Gastrocnemius medialis (tissue), 4 donors: ENCODE measurements at regions of chr15 and their contacts with region 1.

Region 1: GRCh38 chr15:100349696-100350433 is 8.1 kb upstream of the ADAMTS17 start:
- DNase-seq: peak; percentile 89 to 94
- ATAC-seq: peak; percentile 96 to 98
- H3K4me3 ChIP-seq: peak overlapping the region; percentile 77 to 82 (median 80)
- H3K27ac ChIP-seq: peak overlapping the region; percentile 95 to 96 (median 96)
- H3K4me1 ChIP-seq: peaks cover 8 to 9% of the 10 kb centered on the region in 2 donors
- H3K27me3 ChIP-seq: no peaks in the 10 kb centered on the region
- CTCF ChIP-seq: peak; percentile 76 to 90 (median 87)
- POLR2A ChIP-seq: peak; percentile 55 to 63

Region 2: DNA sequence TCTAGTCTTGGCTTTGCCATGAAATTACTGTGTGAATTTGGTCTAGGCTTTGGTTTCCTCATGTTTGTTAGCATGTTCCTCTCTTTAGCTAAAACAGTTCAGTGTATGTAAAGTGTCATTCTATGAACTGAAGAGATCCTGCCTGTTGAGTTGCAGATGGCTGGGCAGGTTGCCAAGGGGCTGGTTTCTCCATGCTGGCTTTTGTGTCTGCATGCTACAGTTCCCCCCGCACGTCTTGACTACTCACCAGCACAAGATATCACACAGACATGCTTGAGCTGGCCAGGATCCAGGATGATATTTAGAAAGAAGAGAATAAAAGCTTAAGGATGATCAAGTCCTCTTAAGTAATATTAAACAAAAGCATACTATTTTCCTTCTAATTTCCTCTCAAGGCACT is 88.7 kb after region 1 on chr15:
- in situ Hi-C with region 1: no loop called
- intact Hi-C with region 1: no loop called
- DNase-seq: peak; percentile 18 to 26
- ATAC-seq: no peak
- H3K4me3 ChIP-seq: no peak overlapping the region
- H3K27ac ChIP-seq: no peak overlapping the region
- H3K4me1 ChIP-seq: peaks cover 3 to 6% of the 10 kb centered on the region in 2 donors
- H3K27me3 ChIP-seq: no peaks in the 10 kb centered on the region
- CTCF ChIP-seq: no peak
- POLR2A ChIP-seq: no peak

Region 3: DNA sequence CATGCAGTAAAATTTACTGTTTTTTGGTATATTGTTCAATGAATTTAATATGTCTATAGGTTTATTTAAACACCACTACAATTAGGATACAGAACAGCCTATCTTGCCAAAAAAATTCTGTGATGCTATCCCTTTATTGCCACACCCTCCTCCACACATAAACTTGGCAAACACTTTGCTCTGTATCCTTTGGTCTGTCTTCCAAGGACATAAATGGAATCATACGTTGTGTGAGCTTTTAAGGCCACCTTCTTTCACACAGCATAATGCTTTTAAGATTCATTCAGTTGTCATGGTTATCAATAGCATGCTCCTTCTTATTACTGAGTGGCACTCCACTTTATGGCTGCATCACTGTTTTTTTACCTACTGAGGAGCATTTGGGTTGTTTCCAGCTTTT is 107.3 kb after region 1 on chr15:
- in situ Hi-C with region 1: no loop called
- intact Hi-C with region 1: no loop called
- DNase-seq: no peak
- ATAC-seq: no peak
- H3K4me3 ChIP-seq: no peak overlapping the region
- H3K27ac ChIP-seq: no peak overlapping the region
- H3K4me1 ChIP-seq: no peaks in the 10 kb centered on the region
- H3K27me3 ChIP-seq: no peaks in the 10 kb centered on the region
- CTCF ChIP-seq: no peak
- POLR2A ChIP-seq: no peak

Region 4: GRCh38 chr15:100515758-100516157 is 165.9 kb after region 1 on chr15:
- in situ Hi-C with region 1: no loop called
- intact Hi-C with region 1: loop called (anchors 1 kb)
- DNase-seq: peak; percentile 69 to 78
- ATAC-seq: peak; percentile 34 to 63
- H3K4me3 ChIP-seq: no peak overlapping the region
- H3K27ac ChIP-seq: peak overlapping the region; percentile 91 to 96 (median 94)
- H3K4me1 ChIP-seq: peaks cover 35 to 46% of the 10 kb centered on the region in 2 donors
- H3K27me3 ChIP-seq: no peaks in the 10 kb centered on the region
- CTCF ChIP-seq: no peak
- POLR2A ChIP-seq: peak in 1 of 2 donors; percentile 19

Region 5: GRCh38 chr15:100565591-100565990 is 215.7 kb after region 1 on chr15:
- in situ Hi-C with region 1: loop called (anchors 5 to 10 kb)
- intact Hi-C with region 1: no loop called
- DNase-seq: no peak
- ATAC-seq: no peak
- H3K4me3 ChIP-seq: no peak overlapping the region
- H3K27ac ChIP-seq: no peak overlapping the region
- H3K4me1 ChIP-seq: peaks cover 0 to 5% of the 10 kb centered on the region in 2 donors
- H3K27me3 ChIP-seq: no peaks in the 10 kb centered on the region
- CTCF ChIP-seq: no peak
- POLR2A ChIP-seq: no peak

Region 6: GRCh38 chr15:100602064-100602822 is 252.4 kb after region 1 on chr15 and contains the starts of genes ASB7 and LINS1:
- in situ Hi-C with region 1: no loop called
- intact Hi-C with region 1: loop called (anchors 1 kb)
- DNase-seq: peak; percentile 100
- ATAC-seq: peak; percentile 96 to 97
- H3K4me3 ChIP-seq: peak within 1 kb of the TSS; percentile 82 to 98 (median 96)
- H3K27ac ChIP-seq: peak within 1 kb of the TSS; percentile 85 to 94 (median 92)
- H3K4me1 ChIP-seq: peaks cover 32 to 44% of the 10 kb centered on the region in 2 donors
- H3K27me3 ChIP-seq: no peaks in the 10 kb centered on the region
- CTCF ChIP-seq: no peak
- POLR2A ChIP-seq: peak; percentile 35 to 49
- total RNA-seq, gene ASB7: 5.1 to 10.3 (median 6.3) TPM
- total RNA-seq, gene LINS1: 3.2 to 11.9 (median 10.3) TPM

Region 7: DNA sequence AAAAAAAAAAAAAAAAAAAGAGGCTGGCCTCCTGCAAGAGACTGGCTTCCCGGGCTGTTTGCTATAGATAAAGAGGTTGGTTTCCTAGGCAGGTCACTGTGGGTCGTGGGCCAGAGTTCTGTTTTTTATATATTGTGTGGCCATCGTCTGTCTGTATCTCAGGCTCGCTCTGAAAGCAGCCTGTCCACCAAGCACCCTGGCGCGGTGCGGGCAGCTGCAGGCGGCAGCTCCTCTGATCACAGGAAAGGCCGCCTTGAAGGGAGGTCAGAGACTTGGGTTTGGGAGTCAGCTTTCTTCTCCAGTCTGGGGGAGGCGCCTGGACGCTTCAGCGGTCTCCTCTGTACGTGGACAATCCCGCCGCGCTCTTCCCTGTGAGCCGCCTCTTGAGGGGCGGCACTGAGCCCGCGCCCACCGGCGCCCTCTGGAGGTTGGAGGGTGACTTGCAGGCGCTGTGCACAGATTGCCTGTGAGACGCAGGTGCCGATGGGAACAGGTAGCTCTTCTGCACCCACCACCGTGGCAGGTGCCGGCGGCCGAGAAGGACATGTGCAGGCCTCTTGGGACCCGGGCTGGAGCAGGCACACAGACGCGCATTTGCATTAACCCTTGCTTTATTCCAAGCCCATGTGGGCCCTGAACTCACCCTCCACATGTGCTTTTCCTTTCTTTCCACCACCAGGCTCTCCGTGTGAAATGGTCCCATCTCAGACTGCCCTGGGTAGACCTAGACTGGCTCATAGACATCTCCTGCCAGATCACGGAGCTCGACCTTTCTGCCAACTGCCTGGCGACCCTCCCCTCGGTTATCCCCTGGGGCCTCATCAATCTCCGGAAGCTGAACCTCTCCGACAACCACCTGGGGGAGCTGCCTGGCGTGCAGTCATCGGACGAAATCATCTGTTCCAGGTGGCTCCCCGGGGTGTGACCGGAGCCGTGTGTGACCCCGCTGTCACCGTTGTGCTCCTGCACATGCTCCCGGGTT is 658.6 kb after region 1 on chr15:
- in situ Hi-C with region 1: loop called in 1 of 4 experiments (anchors 10 kb)
- intact Hi-C with region 1: no loop called
- DNase-seq: peak; percentile 35 to 61
- ATAC-seq: peak; percentile 63 to 84
- H3K4me3 ChIP-seq: peak overlapping the region; percentile 38 to 70 (median 52)
- H3K27ac ChIP-seq: no peak overlapping the region
- H3K4me1 ChIP-seq: no peaks in the 10 kb centered on the region
- H3K27me3 ChIP-seq: no peaks in the 10 kb centered on the region
- CTCF ChIP-seq: peak; percentile 58 to 97 (median 88)
- POLR2A ChIP-seq: no peak